ENCODE measurements at regions of chr9 and their contacts with region 1.

Region 1: DNA sequence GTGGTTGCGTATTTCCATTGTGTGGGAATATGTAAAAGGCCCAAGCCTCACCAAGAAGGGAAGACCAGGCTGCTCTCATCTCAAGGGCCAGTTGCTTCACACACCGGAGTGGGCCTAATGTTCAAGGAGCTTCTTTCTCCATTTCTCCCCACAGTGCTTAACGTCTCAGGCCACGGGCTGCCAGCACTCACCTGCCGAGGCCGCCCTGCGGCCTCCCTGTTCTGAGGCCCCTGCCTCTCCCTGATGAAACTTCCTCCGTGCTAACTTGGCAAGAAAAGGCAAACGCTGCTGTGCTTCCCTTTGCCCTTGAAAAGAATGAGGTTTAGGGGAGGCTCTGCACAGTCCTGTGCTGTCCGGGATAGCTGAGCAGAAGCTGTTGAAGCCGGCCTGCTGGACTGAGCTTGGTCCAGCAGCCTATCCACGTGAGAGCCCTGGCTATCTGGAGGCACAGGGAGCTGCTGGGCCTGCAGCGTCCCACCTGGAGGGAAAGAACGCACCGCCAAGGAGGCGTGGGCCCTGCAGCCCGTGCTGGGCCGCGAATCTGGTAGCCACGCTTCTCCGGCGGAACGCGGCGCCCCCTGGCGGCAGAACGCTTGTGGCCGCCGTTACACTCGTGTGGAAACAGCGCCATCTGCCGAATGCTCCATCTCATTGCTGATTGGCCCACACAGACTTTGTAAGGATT is 73.5 kb upstream of the PRSS3 start:
- DNase-seq: peak; percentile 82
- H3K4me3 ChIP-seq: peak overlapping the region in 1 of 2 experiments; percentile 51; a peak in 1 of 4 replicates
- H3K27ac ChIP-seq: no peak overlapping the region
- H3K4me1 ChIP-seq: peaks cover 0 to 3% of the 10 kb centered on the region in 2 experiments; a peak in 1 of 4 replicates
- H3K27me3 ChIP-seq: no peaks in the 10 kb centered on the region
- CTCF ChIP-seq: peak; percentile 98
- EP300 ChIP-seq: no peak
- RAD21 ChIP-seq: peak; percentile 99

Region 2: GRCh38 chr9:33638391-33638915 is 83.4 kb before region 1 on chr9:
- CTCF ChIA-PET with region 1: interaction called, 19 read pairs
- POLR2A ChIA-PET with region 1: no interaction called
- DNase-seq: no peak
- H3K4me3 ChIP-seq: no peak overlapping the region
- H3K27ac ChIP-seq: no peak overlapping the region
- H3K4me1 ChIP-seq: peaks cover 0 to 3% of the 10 kb centered on the region in 2 experiments; a peak in 1 of 4 replicates
- H3K27me3 ChIP-seq: peaks cover 8% of the 10 kb centered on the region; the same call in 1 of the 2 replicates
- CTCF ChIP-seq: no peak
- EP300 ChIP-seq: no peak
- RAD21 ChIP-seq: no peak

Region 3: DNA sequence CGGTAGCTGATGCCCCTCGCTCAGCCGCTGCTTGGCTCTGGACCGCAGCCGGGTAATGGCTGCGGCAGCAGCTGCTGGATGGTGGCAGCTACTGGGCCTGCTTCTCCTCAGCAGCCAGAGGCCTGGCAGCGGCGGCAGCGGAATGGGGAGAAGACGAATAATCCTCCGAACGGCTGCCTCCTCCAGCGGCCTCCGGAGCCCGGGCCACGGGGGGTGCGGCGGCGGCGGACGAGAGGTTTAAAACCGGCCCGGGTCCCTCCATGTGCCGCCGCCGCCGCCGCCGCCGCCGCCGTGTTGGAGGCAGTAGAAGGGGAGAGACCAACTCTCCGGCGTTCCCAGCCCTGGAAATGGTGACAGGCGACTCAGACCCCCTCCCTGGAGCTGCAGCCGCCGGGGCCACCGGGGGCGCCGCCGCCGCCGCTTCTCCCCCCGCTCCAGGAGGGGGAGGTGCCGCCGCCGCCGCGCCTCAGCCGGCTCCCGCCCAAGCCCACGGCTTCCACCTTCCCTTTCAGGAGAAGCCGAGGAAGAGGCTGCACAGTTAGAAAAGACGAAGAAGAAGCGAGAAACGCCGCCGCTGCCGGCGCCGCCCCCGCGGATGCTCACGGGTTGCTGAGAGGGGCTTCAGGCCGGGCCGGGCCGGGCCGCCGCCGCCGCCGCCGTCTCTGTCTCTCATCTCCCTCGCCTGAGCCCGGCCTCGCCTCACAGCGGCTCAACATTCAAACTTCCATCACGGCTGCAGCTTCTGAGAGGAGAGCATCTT is 44.9 kb before region 1 on chr9:
- CTCF ChIA-PET with region 1: interaction called, 19 read pairs
- POLR2A ChIA-PET with region 1: no interaction called
- DNase-seq: peak; percentile 84
- H3K4me3 ChIP-seq: peak overlapping the region; percentile 60 to 74
- H3K27ac ChIP-seq: peak overlapping the region; percentile 81 to 93
- H3K4me1 ChIP-seq: no peaks in the 10 kb centered on the region; a peak in 1 of 4 replicates
- H3K27me3 ChIP-seq: no peaks in the 10 kb centered on the region
- CTCF ChIP-seq: 0 out of 2 replicates have a peak, but pooled peaks have one; percentile 8
- EP300 ChIP-seq: no peak; a peak in 1 of 4 replicates
- RAD21 ChIP-seq: no peak

Region 4: DNA sequence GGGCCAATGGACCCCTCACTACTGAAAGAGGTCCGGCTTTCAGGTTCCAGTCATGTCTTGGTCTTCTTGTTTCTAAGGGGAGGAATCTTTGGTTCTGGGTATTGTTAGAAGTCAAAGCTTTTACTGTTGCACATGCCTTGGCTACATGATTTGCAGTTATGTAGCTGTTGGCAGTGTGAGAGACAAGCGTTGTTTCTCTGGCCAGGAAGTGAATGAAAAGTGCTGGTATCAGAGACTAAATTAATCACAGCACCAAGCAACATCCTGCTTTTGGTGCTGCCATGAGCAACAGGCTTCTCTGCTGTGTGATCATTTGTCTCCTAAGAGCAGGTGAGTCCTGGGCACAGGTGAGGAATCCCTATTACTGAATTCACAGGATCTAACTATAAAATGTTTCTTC is 26.5 kb before region 1 on chr9:
- CTCF ChIA-PET with region 1: interaction called, 14 read pairs
- POLR2A ChIA-PET with region 1: no interaction called
- DNase-seq: no peak
- H3K4me3 ChIP-seq: no peak overlapping the region
- H3K27ac ChIP-seq: no peak overlapping the region
- H3K4me1 ChIP-seq: no peaks in the 10 kb centered on the region
- H3K27me3 ChIP-seq: no peaks in the 10 kb centered on the region
- CTCF ChIP-seq: no peak
- EP300 ChIP-seq: no peak
- RAD21 ChIP-seq: no peak

Region 5: GRCh38 chr9:33709269-33709668 is 12.5 kb before region 1 on chr9:
- CTCF ChIA-PET with region 1: interaction called, 12 read pairs
- POLR2A ChIA-PET with region 1: no interaction called
- DNase-seq: no peak
- H3K4me3 ChIP-seq: no peak overlapping the region
- H3K27ac ChIP-seq: no peak overlapping the region
- H3K4me1 ChIP-seq: no peaks in the 10 kb centered on the region
- H3K27me3 ChIP-seq: no peaks in the 10 kb centered on the region
- CTCF ChIP-seq: no peak
- EP300 ChIP-seq: no peak
- RAD21 ChIP-seq: no peak

Measured in SK-N-SH (cell line).